K562 (cell line): ENCODE measurements at regions of chr17 and their contacts with region 1.

Region 1: DNA sequence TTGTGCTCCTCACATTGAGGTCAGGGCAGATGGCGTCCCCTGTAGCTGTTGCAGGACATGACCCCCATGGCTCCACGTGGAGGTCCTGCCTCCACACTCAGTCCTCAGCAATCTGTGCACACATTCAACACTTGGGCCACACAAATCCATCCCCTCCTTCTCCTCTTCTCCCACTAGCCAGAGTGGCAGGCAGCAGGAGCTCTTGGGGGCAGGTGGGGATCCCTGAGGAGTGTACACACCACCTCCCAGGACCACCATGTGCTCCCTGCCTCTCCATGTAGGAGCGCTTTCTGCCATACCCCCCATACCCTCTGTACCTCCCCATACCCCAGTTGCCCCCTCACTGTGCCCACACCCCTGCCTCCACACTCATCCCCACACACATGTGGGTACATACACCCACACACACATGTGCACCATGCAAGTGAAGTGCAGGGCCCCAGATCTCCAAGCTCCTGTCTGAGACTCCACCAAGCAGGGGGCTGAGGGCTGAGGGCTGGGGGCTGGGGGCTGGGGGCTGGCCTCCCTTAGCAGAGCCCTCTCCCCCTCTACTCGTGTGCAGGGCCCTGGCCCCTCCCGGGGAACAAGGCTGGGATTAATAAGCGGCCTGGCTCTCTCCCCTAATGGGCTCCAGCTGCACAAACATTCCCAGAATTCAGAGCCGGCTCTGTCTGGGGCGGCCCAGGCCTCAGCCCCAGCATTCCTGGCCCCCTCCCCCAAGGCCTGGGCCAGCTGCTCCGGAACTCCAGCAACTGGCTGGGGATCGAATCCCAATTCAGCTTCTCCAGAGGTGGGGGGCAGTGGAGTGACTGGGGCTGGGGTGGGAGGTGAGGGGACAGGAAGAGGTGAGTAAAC is 48.2 kb upstream of the MEIOC start:
- DNase-seq: no peak
- ATAC-seq: no peak
- H3K4me3 ChIP-seq: no peak overlapping the region
- H3K27ac ChIP-seq: no peak overlapping the region
- H3K4me1 ChIP-seq: no peaks in the 10 kb centered on the region; a peak in 1 of 5 replicates
- H3K27me3 ChIP-seq: peaks cover 24 to 73% of the 10 kb centered on the region in 2 experiments; a peak in 4 of 5 replicates
- CTCF ChIP-seq: no peak
- EP300 ChIP-seq: no peak
- POLR2A ChIP-seq: no peak
- RAD21 ChIP-seq: no peak

Region 2: GRCh38 chr17:44568945-44569858 is 38.9 kb before region 1 on chr17:
- CTCF ChIA-PET with region 1: no interaction called
- POLR2A ChIA-PET with region 1: no interaction called
- in situ Hi-C with region 1: no loop called
- intact Hi-C with region 1: no loop called
- DNase-seq: peak in 2 of 4 experiments; percentile 30 to 46
- ATAC-seq: peak; percentile 84
- H3K4me3 ChIP-seq: no peak overlapping the region
- H3K27ac ChIP-seq: 0 out of 3 replicates have a peak overlapping the region, but pooled peaks have one; percentile 48
- H3K4me1 ChIP-seq: peaks cover 0 to 11% of the 10 kb centered on the region in 2 experiments; a peak in 2 of 5 replicates
- H3K27me3 ChIP-seq: peaks cover 3 to 12% of the 10 kb centered on the region in 2 experiments; a peak in 3 of 5 replicates
- CTCF ChIP-seq: no peak
- EP300 ChIP-seq: no peak
- POLR2A ChIP-seq: no peak
- RAD21 ChIP-seq: no peak

Region 3: DNA sequence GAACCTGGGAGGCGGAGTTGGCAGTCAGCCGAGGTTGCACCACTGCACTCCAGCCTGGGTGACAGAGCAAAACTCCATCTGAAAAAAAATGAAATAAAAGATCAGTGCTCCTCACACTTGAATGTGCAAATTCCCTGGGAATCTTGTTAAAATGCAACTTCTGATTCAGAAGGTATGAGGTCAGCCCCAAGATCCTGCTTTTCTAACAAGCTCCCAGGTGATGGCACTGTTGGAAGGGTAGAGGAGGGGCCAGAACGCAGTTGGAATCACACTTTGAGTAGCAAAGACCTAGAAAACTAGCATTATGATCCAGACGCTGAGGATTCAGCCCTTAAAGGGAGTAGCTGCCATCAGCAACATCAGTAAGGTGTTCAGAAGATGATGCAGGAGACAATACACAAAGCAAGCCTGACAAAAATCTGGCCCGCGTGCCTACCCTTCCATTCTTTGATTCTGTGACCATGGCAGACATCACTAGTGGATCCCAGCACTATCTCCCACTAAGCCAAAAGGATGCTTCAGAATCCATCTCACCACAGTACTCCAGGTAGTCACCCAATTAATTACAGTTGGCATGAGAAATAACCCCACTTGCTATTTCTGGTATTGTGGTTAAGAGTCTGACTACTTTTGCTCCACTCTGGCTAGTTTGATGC is 15.1 kb after region 1 on chr17:
- CTCF ChIA-PET with region 1: no interaction called
- POLR2A ChIA-PET with region 1: interaction called, 10 read pairs
- in situ Hi-C with region 1: no loop called
- intact Hi-C with region 1: no loop called
- DNase-seq: peak in 1 of 4 experiments; percentile 16
- ATAC-seq: peak; percentile 69
- H3K4me3 ChIP-seq: no peak overlapping the region
- H3K27ac ChIP-seq: no peak overlapping the region
- H3K4me1 ChIP-seq: peaks cover 0 to 1% of the 10 kb centered on the region in 2 experiments; a peak in 2 of 5 replicates
- H3K27me3 ChIP-seq: peaks cover 10 to 43% of the 10 kb centered on the region in 2 experiments; a peak in 4 of 5 replicates
- CTCF ChIP-seq: peak; percentile 25 to 34 (median 30); a peak in 5 of 6 replicates
- EP300 ChIP-seq: no peak
- POLR2A ChIP-seq: no peak
- RAD21 ChIP-seq: peak in 1 of 2 experiments; percentile 35; a peak in 2 of 4 replicates

Region 4: GRCh38 chr17:44872131-44872768 is 264.2 kb after region 1 on chr17:
- CTCF ChIA-PET with region 1: no interaction called
- POLR2A ChIA-PET with region 1: no interaction called
- in situ Hi-C with region 1: no loop called
- intact Hi-C with region 1: no loop called
- DNase-seq: no peak
- ATAC-seq: no peak
- H3K4me3 ChIP-seq: no peak overlapping the region
- H3K27ac ChIP-seq: no peak overlapping the region
- H3K4me1 ChIP-seq: no peaks in the 10 kb centered on the region
- H3K27me3 ChIP-seq: no peaks in the 10 kb centered on the region
- CTCF ChIP-seq: no peak
- EP300 ChIP-seq: no peak
- POLR2A ChIP-seq: no peak
- RAD21 ChIP-seq: no peak